Activated T-helper 2 cell treated with anti-CD3 and anti-CD28 coated beads, Interferon-gamma antibody, Interleukin-2, Interleukin-4, amounts not matched to agents 10 μg/mL and 5 μg/mL and 100 μg/mL, durations not matched to agents 14 hours and 24 hours and 36 hours (primary cell): ENCODE measurements at regions of chr10 and their contacts with region 1.

Region 1: DNA sequence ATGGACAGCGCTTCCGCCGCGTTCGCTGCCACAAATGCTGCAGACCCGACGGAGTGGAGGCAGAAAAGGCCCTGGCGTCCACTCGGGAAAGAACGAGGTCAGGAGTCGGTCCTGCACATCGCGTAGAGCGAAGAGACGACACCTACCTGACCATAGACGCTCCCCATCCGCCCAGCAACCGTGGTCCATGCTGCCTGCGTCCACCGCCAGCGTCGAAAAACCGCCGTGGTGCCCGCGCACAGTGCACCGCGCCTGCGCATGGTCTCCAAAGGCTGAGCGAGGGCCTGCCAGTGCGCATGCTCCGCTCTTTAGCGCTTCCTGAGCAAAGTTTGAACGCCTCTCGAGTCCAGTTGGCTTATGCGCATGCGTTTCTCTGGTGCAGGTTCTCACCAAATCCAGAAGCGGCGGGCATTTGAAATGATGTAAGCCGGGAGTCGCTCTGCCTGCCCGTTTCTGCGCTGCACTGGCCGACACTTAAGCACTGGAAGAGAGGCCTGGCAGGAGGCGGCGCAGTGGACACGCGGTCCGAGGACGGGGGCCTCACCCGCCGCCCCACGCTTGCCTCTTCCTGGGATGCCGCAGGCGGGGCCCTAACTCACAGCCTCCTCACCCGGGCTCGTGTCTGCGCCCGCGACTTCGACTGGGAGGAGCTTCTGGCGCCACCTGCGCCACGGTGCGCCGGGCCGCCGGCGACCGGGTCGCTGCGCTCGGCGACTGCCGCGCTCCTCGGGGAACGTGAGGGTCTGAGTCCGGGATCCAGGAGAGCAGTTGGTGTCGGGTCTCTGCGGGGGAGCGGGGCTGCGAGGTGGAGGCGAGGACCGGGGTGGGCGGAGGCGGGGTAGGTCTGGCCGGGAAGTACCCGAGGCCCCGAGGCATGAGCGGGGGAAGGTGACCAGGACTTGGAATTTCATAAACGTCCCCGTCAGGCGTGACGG is at the start of gene FAM24B:
- DNase-seq: peak; percentile 93
- H3K4me3 Mint-ChIP-seq: peak within 1 kb of the TSS; percentile 90
- H3K27ac Mint-ChIP-seq: peak within 1 kb of the TSS; percentile 90
- H3K4me1 Mint-ChIP-seq: peaks cover 47% of the 10 kb centered on the region
- H3K27me3 Mint-ChIP-seq: no peaks in the 10 kb centered on the region
- total RNA-seq, gene FAM24B: 15.6 and 16.0 TPM in 2 replicates

Region 2: GRCh38 chr10:122822973-122823690 is 56.5 kb before region 1 on chr10:
- intact Hi-C with region 1: no loop called
- DNase-seq: no peak
- H3K4me3 Mint-ChIP-seq: no peak overlapping the region
- H3K27ac Mint-ChIP-seq: no peak overlapping the region
- H3K4me1 Mint-ChIP-seq: no peaks in the 10 kb centered on the region
- H3K27me3 Mint-ChIP-seq: peaks cover 13% of the 10 kb centered on the region

Region 3: DNA sequence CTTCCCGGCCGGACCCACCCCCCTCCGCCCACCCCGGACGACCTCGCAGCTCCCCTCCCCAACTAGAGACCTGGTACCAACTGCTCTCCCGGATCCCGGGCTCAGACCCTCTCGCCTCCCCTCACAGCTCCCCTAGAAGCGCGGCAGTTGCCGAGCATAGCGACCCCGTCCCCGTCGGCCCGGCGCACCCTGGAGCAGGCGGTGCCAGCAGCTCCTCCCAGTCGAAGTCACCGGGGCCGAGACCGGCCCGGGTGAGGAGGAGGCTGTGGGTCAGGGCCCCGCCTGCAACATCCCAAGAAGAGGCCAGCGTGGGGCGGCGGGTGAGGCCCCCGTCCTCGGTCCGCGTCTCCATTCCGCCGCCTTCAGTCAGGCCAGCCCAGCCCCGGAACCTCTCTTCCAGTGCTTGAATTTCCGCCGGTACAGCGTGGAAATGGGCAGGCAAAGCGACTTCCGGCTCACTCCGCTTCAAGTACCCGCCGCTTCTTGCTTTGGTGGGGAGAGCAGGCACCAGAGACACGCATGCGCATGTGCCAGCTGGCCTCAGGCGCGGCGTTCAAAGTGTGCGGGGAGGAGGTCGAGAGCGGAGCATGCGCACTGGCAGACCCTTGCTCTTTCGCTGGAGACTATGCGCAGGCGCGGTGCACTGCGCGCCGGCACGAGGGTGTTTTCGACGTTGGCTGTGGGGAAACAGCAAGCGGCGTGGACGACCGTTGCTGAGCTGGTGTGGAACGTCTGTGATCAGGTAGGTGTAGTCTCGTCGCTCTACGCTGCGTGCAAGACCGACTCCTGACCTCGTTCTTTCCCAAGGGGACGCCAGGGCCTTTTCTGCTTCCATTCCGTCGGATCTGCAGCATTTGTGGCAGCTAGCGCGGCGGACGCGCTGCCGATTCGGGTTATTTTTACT is 74.5 kb after region 1 on chr10 and contains the start of gene C10orf88:
- intact Hi-C with region 1: loop called (anchors 1 kb)
- DNase-seq: peak; percentile 97
- H3K4me3 Mint-ChIP-seq: peak within 1 kb of the TSS; percentile 88
- H3K27ac Mint-ChIP-seq: peak within 1 kb of the TSS; percentile 73
- H3K4me1 Mint-ChIP-seq: peaks cover 22% of the 10 kb centered on the region
- H3K27me3 Mint-ChIP-seq: peaks cover 17% of the 10 kb centered on the region
- total RNA-seq, gene C10orf88: 9.1 and 10.0 TPM in 2 replicates

Region 4: GRCh38 chr10:123008439-123009205 is 129.0 kb after region 1 on chr10 and contains the starts of genes ACADSB and IKZF5:
- intact Hi-C with region 1: loop called (anchors 1 kb)
- DNase-seq: peak; percentile 94
- H3K4me3 Mint-ChIP-seq: peak within 1 kb of the TSS; percentile 98
- H3K27ac Mint-ChIP-seq: peak within 1 kb of the TSS; percentile 99
- H3K4me1 Mint-ChIP-seq: peaks cover 35% of the 10 kb centered on the region
- H3K27me3 Mint-ChIP-seq: no peaks in the 10 kb centered on the region
- total RNA-seq, gene ACADSB: 21.4 and 23.3 TPM in 2 replicates
- total RNA-seq, gene IKZF5: 15.0 and 16.1 TPM in 2 replicates